ENCODE measurements at regions of chr1 and their contacts with region 1.

Region 1: GRCh38 chr1:160519642-160520435 is 3.2 kb downstream of the SLAMF6 start:
- DNase-seq: peak; percentile 24
- H3K4me3 Mint-ChIP-seq: peak overlapping the region; percentile 92
- H3K27ac Mint-ChIP-seq: peak overlapping the region; percentile 90
- H3K4me1 Mint-ChIP-seq: peaks cover 88% of the 10 kb centered on the region
- H3K27me3 Mint-ChIP-seq: no peaks in the 10 kb centered on the region

Region 2: GRCh38 chr1:160451119-160451858 is 68.5 kb before region 1 on chr1:
- intact Hi-C with region 1: loop called (anchors 1 kb)
- DNase-seq: no peak
- H3K4me3 Mint-ChIP-seq: peak overlapping the region; percentile 49
- H3K27ac Mint-ChIP-seq: peak overlapping the region; percentile 93
- H3K4me1 Mint-ChIP-seq: peaks cover 71% of the 10 kb centered on the region
- H3K27me3 Mint-ChIP-seq: no peaks in the 10 kb centered on the region

Region 3: DNA sequence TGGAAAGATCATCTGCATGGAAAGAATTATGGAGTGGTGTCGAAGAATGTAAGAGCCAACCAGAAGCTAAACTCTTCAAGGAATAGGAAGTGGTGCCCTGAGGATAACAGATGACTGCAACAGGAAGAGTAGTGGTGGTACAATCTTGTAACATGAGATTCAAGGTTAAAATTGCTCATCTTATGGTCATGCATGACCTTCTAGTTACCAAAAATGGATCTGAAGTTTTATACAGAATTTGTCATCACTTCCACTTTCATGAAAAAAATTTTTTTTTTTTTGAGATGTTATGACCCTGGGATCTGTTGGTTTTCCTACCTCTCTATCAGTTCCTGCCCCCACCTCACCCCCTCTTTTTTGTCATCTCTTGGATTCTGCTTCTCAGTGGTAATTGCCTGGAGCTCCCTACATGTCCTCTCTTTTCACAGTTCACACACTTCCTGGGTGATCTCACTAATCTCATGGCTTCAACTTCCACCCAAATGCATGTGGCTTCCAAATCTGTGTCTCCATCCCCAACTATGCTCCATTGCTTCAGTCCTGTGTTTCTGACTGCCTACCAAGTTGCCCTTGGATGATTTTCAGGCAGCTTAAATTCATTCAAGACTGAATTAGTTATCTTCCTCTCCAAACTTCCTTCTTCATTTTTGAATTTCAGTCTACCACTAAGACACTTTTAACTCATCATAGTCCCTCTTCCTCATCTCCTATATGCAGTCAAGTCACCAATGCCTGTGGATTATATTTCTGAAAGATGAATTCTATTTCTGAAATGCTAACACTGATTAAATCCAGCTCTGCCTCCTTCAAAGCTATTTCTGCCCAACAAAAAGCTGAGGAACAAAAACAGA is 45.2 kb before region 1 on chr1:
- intact Hi-C with region 1: loop called (anchors 1 kb)
- DNase-seq: no peak
- H3K4me3 Mint-ChIP-seq: no peak overlapping the region
- H3K27ac Mint-ChIP-seq: no peak overlapping the region
- H3K4me1 Mint-ChIP-seq: no peaks in the 10 kb centered on the region
- H3K27me3 Mint-ChIP-seq: no peaks in the 10 kb centered on the region

Region 4: GRCh38 chr1:160504666-160505065 is 15.2 kb before region 1 on chr1:
- intact Hi-C with region 1: loop called (anchors 2 kb)
- DNase-seq: no peak
- H3K4me3 Mint-ChIP-seq: no peak overlapping the region
- H3K27ac Mint-ChIP-seq: no peak overlapping the region
- H3K4me1 Mint-ChIP-seq: peaks cover 17% of the 10 kb centered on the region
- H3K27me3 Mint-ChIP-seq: no peaks in the 10 kb centered on the region

Region 5: GRCh38 chr1:160567858-160568682 is 48.2 kb after region 1 on chr1:
- intact Hi-C with region 1: loop called (anchors 1 kb)
- DNase-seq: peak; percentile 50
- H3K4me3 Mint-ChIP-seq: peak overlapping the region; percentile 60
- H3K27ac Mint-ChIP-seq: peak overlapping the region; percentile 95
- H3K4me1 Mint-ChIP-seq: peaks cover 83% of the 10 kb centered on the region
- H3K27me3 Mint-ChIP-seq: no peaks in the 10 kb centered on the region

Region 6: GRCh38 chr1:160597051-160597450 is 77.2 kb after region 1 on chr1:
- intact Hi-C with region 1: no loop called
- DNase-seq: no peak
- H3K4me3 Mint-ChIP-seq: no peak overlapping the region
- H3K27ac Mint-ChIP-seq: no peak overlapping the region
- H3K4me1 Mint-ChIP-seq: peaks cover 6% of the 10 kb centered on the region
- H3K27me3 Mint-ChIP-seq: peaks cover 2% of the 10 kb centered on the region

Region 7: GRCh38 chr1:160607011-160607671 is 87.3 kb after region 1 on chr1:
- intact Hi-C with region 1: loop called (anchors 1 kb)
- DNase-seq: peak; percentile 59
- H3K4me3 Mint-ChIP-seq: peak overlapping the region; percentile 48
- H3K27ac Mint-ChIP-seq: peak overlapping the region; percentile 75
- H3K4me1 Mint-ChIP-seq: peaks cover 64% of the 10 kb centered on the region
- H3K27me3 Mint-ChIP-seq: no peaks in the 10 kb centered on the region

Region 8: DNA sequence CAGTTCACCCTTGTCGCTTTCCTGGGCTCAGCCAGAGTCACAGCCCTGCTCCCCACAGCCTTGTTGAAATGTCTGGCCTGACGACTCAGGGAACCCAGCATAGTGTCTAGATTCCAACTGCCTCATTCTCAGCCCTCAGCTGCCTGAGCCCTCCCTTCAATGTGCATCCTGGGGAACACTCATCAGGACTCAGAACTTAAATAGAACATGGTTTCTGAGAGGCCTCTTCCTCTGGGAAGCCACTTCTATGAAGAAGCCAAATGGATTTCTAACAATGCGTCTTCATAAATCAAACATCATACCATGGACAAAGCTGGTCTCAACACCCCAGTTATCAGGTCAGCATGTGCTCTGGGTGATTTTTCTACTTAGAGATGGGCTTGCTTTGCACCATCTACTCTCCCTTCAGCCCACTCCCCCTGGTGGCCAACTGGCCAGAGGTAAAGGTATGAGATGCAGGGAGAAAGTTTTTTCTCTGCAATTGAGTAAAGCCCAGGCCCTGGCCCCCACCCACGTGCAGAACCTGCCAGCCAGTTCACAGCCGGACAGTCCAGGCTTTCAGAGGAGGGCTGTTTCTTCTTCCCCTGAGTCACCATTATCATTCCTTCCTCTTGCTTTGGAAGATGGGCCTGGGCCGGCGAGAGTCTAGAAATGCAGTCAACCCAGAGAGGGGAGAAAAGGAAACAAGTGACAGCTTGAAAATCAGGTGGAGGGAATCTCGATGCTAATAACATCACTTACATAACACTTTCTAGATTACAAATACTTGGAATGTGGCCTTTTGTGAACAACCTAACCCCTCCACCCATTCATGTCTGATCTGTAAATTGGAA is 310.7 kb after region 1 on chr1:
- intact Hi-C with region 1: no loop called
- DNase-seq: peak; percentile 65
- H3K4me3 Mint-ChIP-seq: no peak overlapping the region
- H3K27ac Mint-ChIP-seq: no peak overlapping the region
- H3K4me1 Mint-ChIP-seq: peaks cover 26% of the 10 kb centered on the region
- H3K27me3 Mint-ChIP-seq: peaks cover 3% of the 10 kb centered on the region

Measured in activated T-helper 1 cell treated with anti-CD3 and anti-CD28 coated beads, Interleukin-12 subunit alpha, Interleukin-12 subunit beta, Interleukin-2, Interleukin-4 antibody, amounts not matched to agents 30 ng/mL and 10 ng/mL and 1 ng/mL, durations not matched to agents 14 hours and 24 hours and 36 hours (primary cell).